Natural killer cell (primary cell): ENCODE measurements at regions of chr1 and their contacts with region 1.

Region 1: DNA sequence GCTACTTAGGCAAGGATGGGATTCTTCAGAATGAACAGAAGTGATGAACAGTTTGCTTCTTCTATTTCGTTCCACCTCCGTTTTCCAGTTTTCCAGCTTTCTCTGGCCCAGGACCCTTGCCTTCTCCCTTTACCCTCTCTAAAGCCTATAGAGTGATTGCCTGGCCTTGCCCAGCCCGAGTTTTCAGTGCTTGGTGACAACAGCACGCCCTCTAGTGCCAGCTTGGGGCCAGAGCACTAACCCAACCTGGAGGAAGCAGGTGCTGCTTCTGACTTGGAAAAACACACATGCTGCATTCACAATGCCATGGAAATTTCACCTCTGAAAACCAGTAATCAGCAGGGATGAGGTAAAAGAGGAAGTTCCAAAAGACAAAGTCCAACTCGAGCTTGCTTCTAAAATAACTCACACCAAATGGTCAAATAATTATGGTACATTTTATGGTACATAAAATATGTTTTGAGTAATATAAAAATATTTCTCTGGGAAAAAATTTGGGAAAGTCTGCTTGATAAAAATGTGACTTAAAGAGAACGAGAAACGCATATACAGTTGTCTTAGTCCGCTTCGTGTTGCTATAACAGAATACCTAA is 26.1 kb downstream of the UBE2T start:
- DNase-seq: peak; percentile 65 to 86
- ATAC-seq: peak; percentile 81 to 97 (median 93)
- H3K4me3 ChIP-seq: no peak overlapping the region
- H3K4me3 Mint-ChIP-seq: no peak overlapping the region
- H3K27ac ChIP-seq: no peak overlapping the region
- H3K27ac Mint-ChIP-seq: no peak overlapping the region
- H3K4me1 ChIP-seq: no peaks in the 10 kb centered on the region
- H3K4me1 Mint-ChIP-seq: peaks cover 0 to 10% of the 10 kb centered on the region in 2 donors
- H3K27me3 ChIP-seq: no peaks in the 10 kb centered on the region
- H3K27me3 Mint-ChIP-seq: no peaks in the 10 kb centered on the region
- CTCF ChIP-seq: peak; percentile 93

Region 2: DNA sequence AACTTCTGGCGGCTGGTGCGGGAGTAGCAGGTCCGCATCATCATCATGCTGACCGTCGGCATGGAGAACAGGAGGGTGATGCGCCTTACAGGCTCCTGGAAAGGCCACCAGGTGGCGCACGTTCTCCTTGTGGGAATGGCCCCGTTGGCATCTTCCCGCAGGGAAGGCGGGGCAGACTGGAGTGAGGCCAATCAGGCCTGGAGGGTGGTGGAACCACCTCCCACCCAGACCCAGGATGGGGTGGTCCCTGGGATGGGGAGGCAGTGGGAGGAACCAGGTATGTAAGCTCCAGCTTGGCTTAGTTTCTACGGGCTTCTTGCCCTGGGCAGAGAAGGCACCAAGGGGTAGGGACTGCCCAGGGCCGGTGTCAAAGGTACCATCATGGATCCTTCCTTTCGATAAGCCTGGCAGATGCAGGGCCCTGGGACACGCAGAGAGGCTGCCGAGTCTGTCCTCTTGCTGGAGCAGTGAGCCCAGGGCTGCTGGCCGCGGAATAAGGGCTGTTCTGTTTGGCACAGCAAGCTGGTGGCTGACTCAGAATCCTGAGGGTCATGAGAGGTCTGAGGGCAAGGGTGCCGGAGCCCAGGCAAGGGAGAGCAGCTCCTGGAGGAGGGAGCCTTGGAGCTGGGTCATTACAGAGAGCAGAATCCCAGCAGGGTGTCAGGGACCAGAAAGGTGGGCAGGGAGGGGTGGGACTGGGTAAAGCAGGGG is 130.8 kb before region 1 on chr1:
- intact Hi-C with region 1: loop called (anchors 1 kb)
- DNase-seq: peak; percentile 65 to 83
- ATAC-seq: peak; percentile 49 to 72 (median 68)
- H3K4me3 ChIP-seq: no peak overlapping the region
- H3K4me3 Mint-ChIP-seq: no peak overlapping the region
- H3K27ac ChIP-seq: no peak overlapping the region
- H3K27ac Mint-ChIP-seq: peak overlapping the region in 1 of 2 donors; percentile 38
- H3K4me1 ChIP-seq: peaks cover 7% of the 10 kb centered on the region
- H3K4me1 Mint-ChIP-seq: peaks cover 0 to 15% of the 10 kb centered on the region in 2 donors
- H3K27me3 ChIP-seq: no peaks in the 10 kb centered on the region
- H3K27me3 Mint-ChIP-seq: peaks cover 0 to 9% of the 10 kb centered on the region in 2 donors
- CTCF ChIP-seq: peak; percentile 76

Region 3: DNA sequence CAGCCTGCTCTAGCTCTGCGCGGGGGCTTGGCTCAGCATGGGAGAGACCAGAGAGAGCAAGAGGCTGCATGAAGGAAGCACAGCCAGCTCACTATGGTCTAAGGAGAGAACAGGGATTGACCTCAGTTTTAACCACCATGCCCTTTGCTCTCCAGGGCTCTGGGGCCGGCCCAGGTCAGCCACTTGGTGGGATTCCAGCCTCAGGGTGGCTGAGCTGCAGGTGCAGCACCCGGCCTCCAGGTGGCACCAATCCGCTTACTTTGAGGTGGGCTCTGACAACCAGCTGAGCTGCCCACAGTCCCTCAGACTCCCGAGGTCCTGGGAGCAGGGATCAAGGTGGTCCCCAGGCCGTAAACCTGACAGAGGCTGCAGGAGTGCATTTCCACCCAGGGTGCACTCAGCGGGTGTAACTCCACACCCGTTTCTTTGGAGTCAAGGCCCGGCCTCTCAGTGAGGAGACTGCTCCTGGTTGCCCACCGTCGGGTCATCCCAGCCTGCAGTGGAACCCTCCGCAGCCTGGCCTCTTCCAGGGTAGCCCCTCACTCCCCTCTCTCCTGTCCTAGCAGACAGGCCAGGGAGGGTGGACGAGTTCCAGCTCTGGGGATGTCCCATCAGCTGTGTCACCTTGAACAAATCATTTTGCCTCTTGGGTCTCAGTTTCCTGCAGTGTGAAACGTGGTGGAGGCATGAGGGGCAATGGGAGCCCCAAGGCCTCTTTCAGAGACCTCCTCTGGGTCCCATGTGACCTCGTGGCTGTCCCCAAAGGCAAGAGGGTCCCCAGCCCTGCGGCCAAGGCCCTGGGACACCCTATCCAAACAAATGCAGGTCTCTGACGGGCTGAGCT is 122.7 kb before region 1 on chr1:
- intact Hi-C with region 1: loop called (anchors 1 kb)
- DNase-seq: peak; percentile 63 to 76
- ATAC-seq: peak in 2 of 3 donors; percentile 22 to 27
- H3K4me3 ChIP-seq: peak overlapping the region; percentile 10
- H3K4me3 Mint-ChIP-seq: peak overlapping the region; percentile 83
- H3K27ac ChIP-seq: no peak overlapping the region
- H3K27ac Mint-ChIP-seq: peak overlapping the region in 1 of 2 donors; percentile 48
- H3K4me1 ChIP-seq: peaks cover 46% of the 10 kb centered on the region
- H3K4me1 Mint-ChIP-seq: peaks cover 42 to 46% of the 10 kb centered on the region in 2 donors
- H3K27me3 ChIP-seq: peaks cover 13% of the 10 kb centered on the region
- H3K27me3 Mint-ChIP-seq: peaks cover 0 to 15% of the 10 kb centered on the region in 2 donors
- CTCF ChIP-seq: peak; percentile 90

Region 4: GRCh38 chr1:202274611-202275010 is 41.1 kb before region 1 on chr1:
- intact Hi-C with region 1: loop called (anchors 2 kb)
- DNase-seq: peak in 1 of 2 donors; percentile 65
- ATAC-seq: peak in 2 of 3 donors; percentile 41 to 53
- H3K4me3 ChIP-seq: no peak overlapping the region
- H3K4me3 Mint-ChIP-seq: no peak overlapping the region
- H3K27ac ChIP-seq: no peak overlapping the region
- H3K27ac Mint-ChIP-seq: no peak overlapping the region
- H3K4me1 ChIP-seq: no peaks in the 10 kb centered on the region
- H3K4me1 Mint-ChIP-seq: peaks cover 5 to 7% of the 10 kb centered on the region in 2 donors
- H3K27me3 ChIP-seq: no peaks in the 10 kb centered on the region
- H3K27me3 Mint-ChIP-seq: no peaks in the 10 kb centered on the region
- CTCF ChIP-seq: peak; percentile 24

Region 5: DNA sequence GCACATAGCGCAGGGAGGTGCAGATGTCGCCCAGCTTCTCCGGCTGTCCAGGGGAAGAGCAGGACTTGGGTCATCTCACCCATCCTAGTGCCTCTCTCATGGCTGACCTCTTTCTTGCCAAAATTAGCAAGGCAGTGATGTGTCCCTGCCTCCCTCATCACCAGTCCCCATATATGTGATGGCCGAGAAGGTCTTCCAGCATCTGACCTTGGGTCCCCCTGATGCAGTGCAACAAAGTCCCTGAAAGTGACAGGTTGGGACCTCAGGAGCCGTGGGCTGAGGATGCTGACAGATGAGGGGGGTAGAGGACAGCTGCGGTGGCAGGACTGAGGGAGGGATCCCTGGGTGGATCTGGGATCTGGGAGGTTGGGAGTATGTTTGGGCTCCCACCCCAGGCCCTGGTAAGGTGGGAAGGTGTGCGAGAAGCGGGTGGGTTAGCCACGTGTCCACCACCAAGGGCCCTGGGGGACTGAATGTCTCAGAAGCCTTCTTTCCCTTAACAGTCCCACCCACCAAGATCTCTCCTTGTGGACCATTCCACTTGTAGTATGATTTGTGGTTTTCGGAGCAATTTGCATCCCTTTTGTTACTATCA is 284.9 kb after region 1 on chr1:
- intact Hi-C with region 1: no loop called
- DNase-seq: no peak
- ATAC-seq: no peak
- H3K4me3 ChIP-seq: no peak overlapping the region
- H3K4me3 Mint-ChIP-seq: no peak overlapping the region
- H3K27ac ChIP-seq: no peak overlapping the region
- H3K27ac Mint-ChIP-seq: no peak overlapping the region
- H3K4me1 ChIP-seq: no peaks in the 10 kb centered on the region
- H3K4me1 Mint-ChIP-seq: no peaks in the 10 kb centered on the region
- H3K27me3 ChIP-seq: no peaks in the 10 kb centered on the region
- H3K27me3 Mint-ChIP-seq: no peaks in the 10 kb centered on the region
- CTCF ChIP-seq: no peak